Heart right ventricle (tissue), 16 donors: ENCODE measurements at regions of chr20 and their contacts with region 1.

Region 1: DNA sequence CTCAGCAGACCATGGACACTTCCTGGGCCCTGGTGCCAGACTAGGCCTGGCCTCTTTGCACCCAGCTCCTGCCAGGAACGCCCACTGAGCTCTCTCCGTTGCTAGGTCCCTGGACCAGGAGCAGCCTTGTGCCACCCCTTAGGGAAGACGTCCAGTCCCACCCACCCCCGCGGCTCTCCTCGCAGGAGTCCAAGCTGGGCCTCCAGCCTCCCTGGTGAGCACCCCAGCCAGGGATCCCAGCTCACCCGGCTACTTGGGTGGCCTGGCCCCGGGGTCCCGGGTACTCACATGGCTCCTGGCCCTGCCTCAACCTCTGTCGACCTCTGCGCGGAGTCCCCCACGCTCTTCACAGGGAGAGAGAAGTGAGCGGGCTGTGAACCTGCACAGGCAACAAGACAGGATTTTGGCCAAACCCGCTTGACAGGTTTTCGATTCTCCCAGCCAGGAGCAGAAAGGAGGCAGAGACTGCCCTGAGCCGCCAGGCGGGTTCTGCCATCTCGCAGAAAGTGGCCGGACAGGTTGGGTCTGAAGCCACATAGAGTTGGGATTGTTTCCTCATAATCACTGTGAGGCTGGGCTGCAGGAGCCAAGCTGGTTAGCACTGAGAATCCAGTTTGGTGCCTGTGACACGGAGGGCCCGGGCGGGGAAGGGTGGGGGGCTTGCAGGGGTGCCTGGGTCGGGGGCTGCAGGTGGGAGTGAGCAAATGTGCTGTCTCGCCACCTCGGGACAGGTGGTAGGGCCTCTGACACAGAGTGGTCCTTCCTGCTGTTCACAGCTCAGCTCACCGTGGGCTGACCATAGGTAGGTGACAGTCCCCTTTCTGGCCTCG is at the start of gene RBBP8NL:
- DNase-seq: no peak
- ATAC-seq: no peak
- H3K4me3 ChIP-seq: no peak within 1 kb of the TSS
- H3K27ac ChIP-seq: no peak within 1 kb of the TSS
- H3K4me1 ChIP-seq: no peaks in the 10 kb centered on the region
- H3K27me3 ChIP-seq: peaks cover 0 to 41% (median 18%) of the 10 kb centered on the region in 7 donors
- CTCF ChIP-seq: no peak
- total RNA-seq, gene RBBP8NL: not detected

Region 2: DNA sequence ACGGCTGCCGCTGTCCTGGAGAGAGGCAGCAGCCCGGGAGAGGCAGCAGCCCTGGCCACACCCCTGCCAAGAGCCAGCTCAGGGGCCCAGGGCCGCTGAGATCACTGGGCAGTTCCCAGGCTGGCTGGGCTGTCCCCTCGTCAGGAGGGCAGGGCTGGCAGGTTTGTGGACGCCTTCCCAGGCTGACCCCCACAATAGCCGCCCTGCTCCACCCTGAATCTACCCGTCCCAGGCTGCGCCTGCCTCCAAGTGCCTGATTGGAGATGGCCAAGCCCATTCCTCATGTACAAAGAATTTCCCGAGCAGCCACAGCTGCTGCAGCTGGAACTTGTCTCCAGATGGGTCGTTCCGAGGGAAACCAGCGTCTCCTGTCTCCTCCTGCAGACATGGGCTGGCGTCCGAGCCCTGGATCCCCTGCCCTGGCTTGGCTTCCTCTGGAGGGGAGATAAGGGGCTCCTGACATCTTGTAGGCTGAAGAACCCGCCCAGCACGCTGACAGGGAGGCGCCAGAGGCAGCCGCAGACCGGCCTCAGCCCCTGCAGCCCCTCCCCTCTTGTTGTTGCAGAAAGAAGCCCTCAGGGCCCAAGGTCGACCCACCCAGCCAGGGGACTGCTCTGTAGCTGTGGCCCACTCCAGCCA is 57.8 kb after region 1 on chr20:
- intact Hi-C with region 1: loop called in 1 of 10 experiments (anchors 10 kb)
- DNase-seq: peak in 1 of 2 donors; percentile 27
- ATAC-seq: peak; percentile 36 to 75 (median 52)
- H3K4me3 ChIP-seq: peak overlapping the region in 3 of 10 donors; percentile 7 to 13 (median 10)
- H3K27ac ChIP-seq: peak overlapping the region in 4 of 10 donors; percentile 3 to 39 (median 14)
- H3K4me1 ChIP-seq: peaks cover 9 to 52% (median 27%) of the 10 kb centered on the region in 9 donors
- H3K27me3 ChIP-seq: peaks cover 0 to 83% (median 74%) of the 10 kb centered on the region in 7 donors
- CTCF ChIP-seq: no peak

Region 3: GRCh38 chr20:63082301-63082805 is 655.0 kb after region 1 on chr20:
- intact Hi-C with region 1: no loop called
- DNase-seq: peak; percentile 48 to 54
- ATAC-seq: peak in 6 of 8 donors; percentile 45 to 71 (median 57)
- H3K4me3 ChIP-seq: no peak overlapping the region
- H3K27ac ChIP-seq: no peak overlapping the region
- H3K4me1 ChIP-seq: no peaks in the 10 kb centered on the region
- H3K27me3 ChIP-seq: peaks cover 0 to 57% (median 31%) of the 10 kb centered on the region in 7 donors
- CTCF ChIP-seq: no peak